ENCODE measurements at regions of chr12 and their contacts with region 1.

Region 1: DNA sequence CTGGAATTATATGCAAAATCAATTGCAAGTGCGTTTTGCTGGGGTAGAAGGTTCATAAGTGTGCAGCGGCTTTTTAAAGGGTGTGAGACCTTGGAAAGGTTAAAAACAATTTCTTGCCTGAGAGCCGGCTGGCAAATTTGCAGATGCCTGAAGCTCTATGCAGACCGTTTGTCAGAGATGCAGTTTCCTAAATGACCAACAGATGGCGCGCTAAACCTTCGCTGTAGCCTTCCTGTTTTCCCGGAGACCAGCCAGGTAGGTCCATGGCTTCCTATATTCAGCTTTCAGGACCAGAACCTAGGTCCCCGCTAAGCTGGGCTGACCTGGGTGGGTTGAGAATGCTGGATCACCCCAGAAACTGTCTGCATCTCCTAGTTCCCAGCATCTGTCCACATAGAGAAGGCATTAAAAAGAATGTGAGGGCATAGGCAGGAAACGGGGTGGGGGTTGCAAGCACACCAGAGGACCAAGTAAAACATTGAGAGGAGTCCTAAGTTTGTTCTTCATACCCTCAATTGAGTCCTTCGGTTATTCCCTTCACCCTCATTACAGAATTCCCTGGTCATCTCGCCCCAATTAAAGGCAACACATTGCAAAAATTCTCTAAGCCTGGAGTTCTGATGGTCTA is 5.7 kb upstream of the NOS1 start:
- DNase-seq: peak; percentile 84 to 89 (median 88)
- ATAC-seq: peak; percentile 80
- H3K4me3 ChIP-seq: no peak overlapping the region
- H3K27ac ChIP-seq: no peak overlapping the region
- H3K4me1 ChIP-seq: no peaks in the 10 kb centered on the region
- H3K27me3 ChIP-seq: no peaks in the 10 kb centered on the region
- CTCF ChIP-seq: peak; percentile 84 to 92 (median 87)
- POLR2A ChIP-seq: no peak

Region 2: DNA sequence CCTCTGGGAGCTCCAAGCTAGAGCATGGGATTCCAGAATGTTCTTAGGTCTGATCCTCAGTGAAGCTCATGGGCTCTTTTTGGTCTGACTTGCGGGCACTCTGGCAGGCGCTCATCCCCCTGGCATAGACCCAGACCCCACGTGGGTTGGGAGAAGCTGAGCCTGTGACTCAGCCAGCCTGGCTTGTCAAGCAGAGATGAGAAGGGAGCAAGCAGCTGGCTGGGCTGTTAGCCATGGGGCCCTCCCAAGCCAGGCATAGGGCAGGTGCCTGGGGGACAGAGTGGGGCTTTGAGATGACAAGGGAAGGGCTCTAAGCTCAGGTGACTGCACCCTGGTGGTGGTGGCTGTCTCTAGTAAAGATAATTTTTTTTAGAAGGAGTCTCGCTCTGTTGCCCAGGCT is 74.6 kb after region 1 on chr12:
- intact Hi-C with region 1: no loop called
- DNase-seq: peak; percentile 21 to 61 (median 42)
- ATAC-seq: peak; percentile 63
- H3K4me3 ChIP-seq: no peak overlapping the region
- H3K27ac ChIP-seq: no peak overlapping the region
- H3K4me1 ChIP-seq: peaks cover 5% of the 10 kb centered on the region
- H3K27me3 ChIP-seq: no peaks in the 10 kb centered on the region
- CTCF ChIP-seq: no peak
- POLR2A ChIP-seq: no peak

Region 3: DNA sequence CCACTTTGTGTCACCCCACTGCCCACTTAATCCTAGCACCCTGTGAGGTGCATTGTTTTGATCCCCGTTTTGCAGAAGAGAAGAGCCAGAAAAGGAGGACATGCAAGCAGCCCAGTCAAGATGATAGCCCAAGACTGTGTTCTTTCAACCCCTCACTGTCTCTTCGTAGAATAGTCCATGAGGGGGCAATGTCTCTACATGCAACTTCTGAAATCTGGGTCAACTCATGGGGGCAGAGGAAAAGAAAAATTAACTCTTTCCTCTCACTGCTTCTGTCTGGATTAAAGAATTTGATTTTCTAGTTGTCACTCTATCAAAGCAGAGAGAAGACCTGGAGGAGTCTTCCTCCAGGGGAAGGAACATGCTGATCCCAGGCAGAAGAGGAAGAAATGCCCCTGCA is 223.9 kb after region 1 on chr12:
- intact Hi-C with region 1: loop called (anchors 5 kb)
- DNase-seq: no peak
- ATAC-seq: no peak
- H3K4me3 ChIP-seq: no peak overlapping the region
- H3K27ac ChIP-seq: no peak overlapping the region
- H3K4me1 ChIP-seq: peaks cover 3% of the 10 kb centered on the region
- H3K27me3 ChIP-seq: no peaks in the 10 kb centered on the region
- CTCF ChIP-seq: no peak
- POLR2A ChIP-seq: no peak

Region 4: DNA sequence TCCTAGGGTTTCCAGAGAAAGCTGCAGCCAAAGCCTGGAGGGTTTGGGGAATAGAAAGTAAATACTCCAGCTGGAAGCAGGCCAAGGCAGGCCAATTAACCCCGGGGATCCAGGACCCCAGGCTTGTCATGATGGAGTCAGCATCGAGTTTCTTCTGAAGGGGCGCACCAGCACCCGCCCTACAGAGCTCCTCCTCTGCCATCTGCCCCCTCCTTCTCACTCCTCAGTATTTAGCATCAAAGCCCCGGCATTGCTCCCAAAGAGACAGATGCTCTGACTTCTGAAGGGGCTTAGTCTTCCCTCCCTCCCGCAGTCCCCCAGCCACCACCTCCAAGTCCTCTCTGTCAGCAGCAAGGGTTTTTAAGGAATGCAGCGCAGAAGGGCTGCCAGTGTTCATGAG is 279.4 kb after region 1 on chr12:
- intact Hi-C with region 1: no loop called
- DNase-seq: no peak
- ATAC-seq: no peak
- H3K4me3 ChIP-seq: no peak overlapping the region
- H3K27ac ChIP-seq: no peak overlapping the region
- H3K4me1 ChIP-seq: no peaks in the 10 kb centered on the region
- H3K27me3 ChIP-seq: no peaks in the 10 kb centered on the region
- CTCF ChIP-seq: no peak
- POLR2A ChIP-seq: no peak

Region 5: GRCh38 chr12:117836999-117837736 is 470.0 kb after region 1 on chr12:
- intact Hi-C with region 1: loop called (anchors 5 kb)
- DNase-seq: peak; percentile 78 to 85 (median 82)
- ATAC-seq: peak; percentile 64
- H3K4me3 ChIP-seq: no peak overlapping the region
- H3K27ac ChIP-seq: no peak overlapping the region
- H3K4me1 ChIP-seq: no peaks in the 10 kb centered on the region
- H3K27me3 ChIP-seq: no peaks in the 10 kb centered on the region
- CTCF ChIP-seq: peak; percentile 86 to 95 (median 92)
- POLR2A ChIP-seq: no peak